ENCODE measurements at regions of chr12 and their contacts with region 1.

Region 1: DNA sequence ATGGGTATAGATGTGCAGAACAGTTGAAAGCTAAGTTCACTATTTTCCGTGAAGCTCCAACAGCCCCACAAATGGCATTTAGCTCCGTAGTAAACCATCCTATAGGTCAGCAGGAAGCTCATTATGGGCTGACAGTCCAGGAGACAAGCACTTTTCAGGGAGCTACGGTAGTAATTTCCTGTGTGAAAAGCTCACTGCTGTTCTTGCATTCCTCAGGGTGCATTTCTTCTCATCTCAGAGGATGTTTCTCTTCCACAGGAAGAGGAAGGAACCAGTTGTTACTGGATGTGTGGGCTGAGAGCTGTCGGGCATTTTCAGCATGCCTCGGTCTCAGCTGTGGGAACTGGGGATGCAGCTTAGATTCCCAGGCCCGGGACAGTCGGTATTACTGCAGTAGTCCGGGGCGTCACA is 72.8 kb downstream of the GALNT4 start:
- DNase-seq: no peak
- CTCF ChIP-seq: no peak

Region 2: DNA sequence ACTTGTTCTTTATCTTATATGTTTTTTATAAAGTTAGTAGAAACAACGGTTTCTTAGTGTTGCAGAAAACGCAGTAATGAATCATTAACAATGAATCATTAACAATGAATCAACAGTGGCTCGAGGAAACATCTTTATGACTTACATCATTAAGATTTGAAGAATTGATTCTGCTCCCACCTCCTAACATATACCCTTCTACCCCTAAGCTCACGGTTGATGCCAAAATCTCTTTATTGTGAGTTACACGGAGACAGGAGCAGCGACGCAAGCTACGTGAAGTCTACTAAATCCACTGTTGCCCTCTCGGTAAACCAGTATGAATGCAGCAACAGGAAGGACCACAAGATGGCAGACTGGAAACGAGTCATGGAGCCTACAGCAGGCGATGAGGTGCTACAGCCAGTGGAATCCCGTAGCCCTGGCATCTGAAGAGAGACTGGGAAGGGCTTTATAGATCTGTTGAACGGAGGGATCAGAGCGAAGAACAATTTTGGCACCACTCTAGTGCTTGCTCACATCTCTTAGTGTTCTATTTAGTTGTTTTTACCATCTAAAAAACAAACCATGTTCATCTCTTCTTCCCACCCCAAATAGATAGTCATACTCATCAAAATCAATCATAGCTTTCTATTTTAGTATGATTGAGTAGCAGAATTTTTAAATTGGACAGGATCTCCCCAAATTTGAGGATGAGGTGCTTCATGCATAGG is 432.3 kb before region 1 on chr12:
- in situ Hi-C with region 1: loop called (anchors 5 kb)
- DNase-seq: peak; percentile 53
- CTCF ChIP-seq: peak; percentile 79

Region 3: DNA sequence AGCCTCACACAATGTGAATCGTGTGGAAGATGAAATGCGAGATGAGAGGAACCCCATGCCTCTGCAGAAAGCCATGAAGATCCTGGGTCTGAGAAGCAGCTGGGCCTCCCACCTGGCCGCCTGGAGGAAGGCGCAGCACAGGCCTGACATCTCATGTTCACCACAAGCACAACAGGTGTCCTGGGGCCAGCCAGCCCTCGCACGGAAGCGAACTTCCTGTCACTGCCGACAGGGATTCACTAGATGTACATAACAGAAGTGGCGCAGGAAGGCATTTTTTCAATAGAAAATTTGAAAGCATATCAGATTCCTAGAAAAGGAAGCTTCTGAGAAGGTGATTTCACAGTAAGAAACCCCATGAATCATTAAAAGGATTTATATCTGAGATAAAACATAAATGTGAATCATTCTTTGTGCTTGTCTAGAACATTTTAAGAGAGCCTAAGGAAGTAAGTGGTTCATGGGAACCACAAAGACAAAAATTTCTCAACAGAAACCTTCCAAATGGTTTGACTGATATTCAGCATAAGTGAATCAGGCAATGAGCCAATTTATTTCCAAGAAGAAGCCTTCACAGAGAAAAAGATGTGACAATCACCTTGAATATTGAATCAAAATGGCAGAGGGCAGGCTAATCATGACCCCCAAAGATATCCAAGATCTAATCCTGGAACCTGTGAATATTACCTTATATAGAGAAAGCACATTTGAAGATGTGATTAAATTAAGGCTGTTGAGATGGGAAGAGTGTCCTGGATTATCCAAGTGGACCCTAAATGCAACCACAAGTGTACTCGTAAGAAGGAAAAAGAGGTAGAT is 411.5 kb before region 1 on chr12:
- in situ Hi-C with region 1: loop called (anchors 10 kb)
- DNase-seq: peak; percentile 42
- CTCF ChIP-seq: no peak

Region 4: GRCh38 chr12:89880690-89881350 is 429.0 kb after region 1 on chr12:
- in situ Hi-C with region 1: no loop called
- DNase-seq: peak; percentile 48
- CTCF ChIP-seq: no peak